Sigmoid colon (tissue), 7 donors: ENCODE measurements at regions of chr17 and their contacts with region 1.

Region 1: GRCh38 chr17:62968445-62968923 is 2.4 kb downstream of the TANC2 start:
- DNase-seq: no peak
- H3K4me3 ChIP-seq: no peak overlapping the region
- H3K27ac ChIP-seq: no peak overlapping the region
- H3K4me1 ChIP-seq: peaks cover 0 to 22% (median 14%) of the 10 kb centered on the region in 4 donors
- H3K27me3 ChIP-seq: no peaks in the 10 kb centered on the region
- CTCF ChIP-seq: peak; percentile 69 to 89 (median 74)
- EP300 ChIP-seq: no peak
- POLR2A ChIP-seq: no peak

Region 2: DNA sequence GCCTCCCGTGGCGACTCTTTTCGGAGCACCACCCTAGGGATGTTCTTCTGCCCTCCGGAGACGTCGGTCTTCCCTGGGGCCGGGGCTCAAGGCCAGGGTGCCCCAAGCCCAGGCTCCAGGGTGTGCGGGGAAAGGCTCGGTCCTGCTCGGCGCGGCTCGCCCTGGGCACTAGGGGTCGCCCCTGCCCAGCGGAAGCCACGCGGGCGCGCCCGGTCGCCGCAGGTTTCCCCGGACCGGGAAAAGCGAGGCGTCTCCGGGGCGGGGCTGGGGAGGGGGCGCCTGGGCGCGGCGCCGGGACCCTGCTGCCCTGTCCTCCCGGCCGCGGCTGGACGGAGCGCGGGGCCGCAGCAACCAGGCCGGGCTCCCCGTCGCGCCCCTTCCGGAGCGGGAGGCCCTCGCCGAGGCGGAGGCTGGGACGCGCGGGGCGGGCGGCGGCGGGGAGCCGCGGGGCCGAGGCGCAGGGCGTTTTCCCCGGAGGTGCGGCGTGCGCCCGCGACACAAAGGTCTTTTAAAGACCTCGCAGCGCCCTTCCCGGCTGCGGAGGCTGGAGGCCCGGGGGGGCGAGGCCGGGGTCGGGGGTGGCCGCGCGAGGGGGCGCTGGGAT is 264.6 kb before region 1 on chr17:
- intact Hi-C with region 1: loop called (anchors 1 kb)
- DNase-seq: peak; percentile 87
- H3K4me3 ChIP-seq: peak overlapping the region; percentile 15 to 74 (median 60)
- H3K27ac ChIP-seq: peak overlapping the region; percentile 63 to 72 (median 70)
- H3K4me1 ChIP-seq: peaks cover 0 to 18% (median 14%) of the 10 kb centered on the region in 4 donors
- H3K27me3 ChIP-seq: peaks cover 0 to 9% (median 0%) of the 10 kb centered on the region in 3 donors
- CTCF ChIP-seq: peak; percentile 58 to 82 (median 65)
- EP300 ChIP-seq: no peak
- POLR2A ChIP-seq: no peak

Region 3: GRCh38 chr17:62778689-62779681 is 189.5 kb before region 1 on chr17:
- intact Hi-C with region 1: no loop called
- DNase-seq: no peak
- H3K4me3 ChIP-seq: no peak overlapping the region
- H3K27ac ChIP-seq: no peak overlapping the region
- H3K4me1 ChIP-seq: peaks cover 0 to 6% (median 2%) of the 10 kb centered on the region in 4 donors
- H3K27me3 ChIP-seq: no peaks in the 10 kb centered on the region
- CTCF ChIP-seq: no peak
- EP300 ChIP-seq: no peak
- POLR2A ChIP-seq: no peak